ENCODE measurements at regions of chr5 and their contacts with region 1.

Region 1: GRCh38 chr5:71482132-71482531 is 26.7 kb downstream of the BDP1 start:
- DNase-seq: no peak
- ATAC-seq: no peak
- H3K4me3 Mint-ChIP-seq: no peak overlapping the region
- H3K27ac Mint-ChIP-seq: no peak overlapping the region
- H3K4me1 Mint-ChIP-seq: no peaks in the 10 kb centered on the region
- H3K27me3 Mint-ChIP-seq: no peaks in the 10 kb centered on the region
- CTCF ChIP-seq: no peak

Region 2: GRCh38 chr5:71522151-71522550 is 40.0 kb after region 1 on chr5:
- CTCF ChIA-PET with region 1: no interaction called
- POLR2A ChIA-PET with region 1: no interaction called
- intact Hi-C with region 1: loop called (anchors 5 kb)
- DNase-seq: no peak
- ATAC-seq: no peak
- H3K4me3 Mint-ChIP-seq: no peak overlapping the region
- H3K27ac Mint-ChIP-seq: no peak overlapping the region
- H3K4me1 Mint-ChIP-seq: no peaks in the 10 kb centered on the region
- H3K27me3 Mint-ChIP-seq: no peaks in the 10 kb centered on the region
- CTCF ChIP-seq: no peak